Adrenal gland (tissue), 19 donors: ENCODE measurements at regions of chr20 and their contacts with region 1.

Region 1: DNA sequence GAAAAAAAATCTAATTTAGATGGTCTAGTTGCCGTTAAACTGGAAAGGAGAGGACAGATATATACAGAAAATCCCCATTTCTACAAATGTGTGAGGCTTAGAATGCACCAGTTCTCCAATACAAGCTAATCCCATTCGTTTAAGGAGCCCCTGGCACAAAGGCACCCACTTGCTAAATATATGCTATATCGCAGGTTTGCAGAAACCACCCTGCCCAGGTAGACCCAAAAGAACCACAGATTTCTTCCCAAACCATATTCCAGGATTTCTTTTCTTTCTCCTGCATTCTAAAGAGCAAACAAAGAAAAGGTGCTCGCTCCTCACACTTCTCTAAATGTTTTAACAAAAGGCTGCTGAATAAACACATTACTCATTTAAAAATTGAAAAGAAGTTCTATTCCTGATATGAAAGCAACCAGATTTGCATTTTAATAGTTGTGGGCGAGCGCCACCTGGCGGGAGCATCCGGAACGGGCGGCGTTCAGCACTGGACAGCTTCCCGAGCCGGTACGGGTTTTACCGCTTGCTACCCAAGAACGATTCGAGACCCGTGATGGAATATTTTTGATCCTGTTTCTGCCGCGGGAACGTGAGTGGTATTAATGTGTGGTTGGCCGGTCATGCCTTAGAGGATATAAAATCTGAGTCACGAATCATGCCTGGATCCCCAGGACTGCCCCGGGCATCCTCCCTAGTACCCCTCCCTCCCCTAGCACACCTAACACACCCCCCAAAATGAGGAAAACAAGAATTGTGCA is 2.1 kb downstream of the PTPRT start:
- DNase-seq: peak; percentile 48 to 91 (median 75)
- H3K4me3 ChIP-seq: no peak overlapping the region
- H3K27ac ChIP-seq: no peak overlapping the region
- H3K4me1 ChIP-seq: no peaks in the 10 kb centered on the region
- H3K27me3 ChIP-seq: peaks cover 39% of the 10 kb centered on the region
- CTCF ChIP-seq: peak; percentile 82 to 96 (median 87)
- POLR2A ChIP-seq: no peak

Region 2: GRCh38 chr20:41738604-41739206 is 1449.0 kb before region 1 on chr20:
- intact Hi-C with region 1: loop called in 1 of 2 experiments (anchors 5 kb)
- DNase-seq: peak; percentile 43 to 80 (median 54)
- H3K4me3 ChIP-seq: no peak overlapping the region
- H3K27ac ChIP-seq: no peak overlapping the region
- H3K4me1 ChIP-seq: no peaks in the 10 kb centered on the region
- H3K27me3 ChIP-seq: no peaks in the 10 kb centered on the region
- CTCF ChIP-seq: peak; percentile 59 to 86 (median 74)
- POLR2A ChIP-seq: no peak

Region 3: DNA sequence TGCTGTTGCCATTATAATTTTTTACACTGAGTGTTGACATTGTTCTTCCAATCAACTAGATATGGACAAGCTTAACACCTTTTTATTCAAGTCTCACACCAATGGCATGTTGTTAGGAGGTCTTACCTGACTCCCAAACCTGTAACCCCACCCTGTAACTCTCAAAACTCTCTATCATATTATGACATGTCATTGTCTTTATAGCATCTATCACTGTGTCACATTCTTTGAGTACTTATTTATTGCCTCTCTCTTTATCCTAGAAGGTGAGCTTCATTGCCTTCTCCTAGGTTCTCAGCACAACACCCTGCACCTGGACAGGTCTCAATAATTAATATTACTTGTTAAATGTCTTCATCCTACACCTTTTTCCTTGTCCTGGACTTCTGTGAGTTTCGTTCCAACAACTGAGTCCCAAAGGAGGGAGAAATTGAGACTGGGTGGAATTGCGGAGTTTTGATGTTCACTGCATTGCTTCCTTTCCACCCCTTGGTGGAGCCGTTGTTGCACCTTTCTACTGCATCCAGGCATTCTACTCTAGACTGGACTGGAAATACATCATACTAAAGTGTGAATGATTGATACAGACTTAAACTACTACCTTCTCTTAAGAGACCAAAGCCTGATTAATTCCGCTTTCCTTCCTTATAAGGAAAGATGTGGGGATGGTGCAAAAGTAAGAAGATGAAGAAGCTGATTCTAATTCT is 1231.5 kb before region 1 on chr20:
- intact Hi-C with region 1: loop called in 1 of 2 experiments (anchors 10 kb)
- DNase-seq: peak in 4 of 7 donors; percentile 20 to 60 (median 34)
- H3K4me3 ChIP-seq: no peak overlapping the region
- H3K27ac ChIP-seq: no peak overlapping the region
- H3K4me1 ChIP-seq: no peaks in the 10 kb centered on the region
- H3K27me3 ChIP-seq: no peaks in the 10 kb centered on the region
- CTCF ChIP-seq: peak; percentile 28 to 65 (median 55)
- POLR2A ChIP-seq: no peak